ENCODE measurements at regions of chr10 and their contacts with region 1.

Region 1: GRCh38 chr10:117496616-117497028 is 45.9 kb upstream of the EMX2 start:
- DNase-seq: peak; percentile 81
- H3K4me3 Mint-ChIP-seq: no peak overlapping the region
- H3K27ac Mint-ChIP-seq: no peak overlapping the region
- H3K4me1 Mint-ChIP-seq: no peaks in the 10 kb centered on the region
- H3K27me3 Mint-ChIP-seq: peaks cover 33% of the 10 kb centered on the region
- CTCF ChIP-seq: peak; percentile 94

Region 2: GRCh38 chr10:117431160-117431559 is 65.5 kb before region 1 on chr10:
- CTCF ChIA-PET with region 1: interaction called, 77 read pairs
- POLR2A ChIA-PET with region 1: interaction called, 5 read pairs
- intact Hi-C with region 1: loop called (anchors 1 kb)
- DNase-seq: peak; percentile 73
- H3K4me3 Mint-ChIP-seq: no peak overlapping the region
- H3K27ac Mint-ChIP-seq: no peak overlapping the region
- H3K4me1 Mint-ChIP-seq: no peaks in the 10 kb centered on the region
- H3K27me3 Mint-ChIP-seq: no peaks in the 10 kb centered on the region
- CTCF ChIP-seq: peak; percentile 36

Region 3: DNA sequence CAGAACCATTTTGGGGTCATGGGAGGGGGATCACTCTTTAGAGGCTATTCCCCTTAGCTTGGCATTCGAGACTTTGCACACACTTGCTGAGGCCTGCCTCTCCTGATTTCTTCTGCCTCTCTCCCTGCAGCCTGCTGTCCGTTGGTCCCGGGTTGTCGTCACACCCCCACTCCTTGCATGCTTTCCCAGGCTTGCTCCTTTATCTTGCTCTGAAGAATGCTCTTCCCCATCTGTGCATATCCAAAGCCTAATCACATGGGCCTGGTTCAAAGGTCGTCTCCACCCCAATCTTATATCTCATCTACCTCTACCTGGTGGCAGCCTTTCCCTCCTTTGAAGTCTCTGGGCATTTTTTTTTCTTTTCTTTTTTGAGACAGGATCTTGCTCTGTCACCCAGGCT is 21.6 kb after region 1 on chr10:
- CTCF ChIA-PET with region 1: interaction called, 15 read pairs
- POLR2A ChIA-PET with region 1: no interaction called
- intact Hi-C with region 1: no loop called
- DNase-seq: no peak
- H3K4me3 Mint-ChIP-seq: no peak overlapping the region
- H3K27ac Mint-ChIP-seq: no peak overlapping the region
- H3K4me1 Mint-ChIP-seq: no peaks in the 10 kb centered on the region
- H3K27me3 Mint-ChIP-seq: peaks cover 5% of the 10 kb centered on the region
- CTCF ChIP-seq: no peak

Region 4: DNA sequence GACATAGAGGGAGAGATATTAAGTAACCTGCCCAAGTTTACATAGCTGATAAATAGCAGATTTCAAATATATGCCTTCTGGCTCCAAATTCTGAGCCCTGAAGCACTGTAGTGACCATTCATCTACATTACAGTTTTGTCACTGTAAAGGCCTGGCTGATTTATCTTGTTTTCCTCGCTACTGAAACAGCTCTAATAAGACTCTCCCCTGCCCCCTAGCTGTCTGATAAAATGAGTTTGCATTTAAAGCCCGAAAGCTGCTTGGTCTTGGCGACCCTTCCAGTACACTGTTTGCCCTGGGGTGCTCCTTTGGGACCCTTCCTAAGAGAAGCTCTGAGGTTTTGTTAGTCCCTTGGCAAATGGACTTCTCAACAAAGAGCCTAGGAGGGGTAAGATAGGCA is 609.8 kb after region 1 on chr10:
- CTCF ChIA-PET with region 1: interaction called, 7 read pairs
- POLR2A ChIA-PET with region 1: no interaction called
- intact Hi-C with region 1: loop called (anchors 2 kb)
- DNase-seq: peak; percentile 49
- H3K4me3 Mint-ChIP-seq: no peak overlapping the region
- H3K27ac Mint-ChIP-seq: no peak overlapping the region
- H3K4me1 Mint-ChIP-seq: no peaks in the 10 kb centered on the region
- H3K27me3 Mint-ChIP-seq: no peaks in the 10 kb centered on the region
- CTCF ChIP-seq: no peak

Region 5: DNA sequence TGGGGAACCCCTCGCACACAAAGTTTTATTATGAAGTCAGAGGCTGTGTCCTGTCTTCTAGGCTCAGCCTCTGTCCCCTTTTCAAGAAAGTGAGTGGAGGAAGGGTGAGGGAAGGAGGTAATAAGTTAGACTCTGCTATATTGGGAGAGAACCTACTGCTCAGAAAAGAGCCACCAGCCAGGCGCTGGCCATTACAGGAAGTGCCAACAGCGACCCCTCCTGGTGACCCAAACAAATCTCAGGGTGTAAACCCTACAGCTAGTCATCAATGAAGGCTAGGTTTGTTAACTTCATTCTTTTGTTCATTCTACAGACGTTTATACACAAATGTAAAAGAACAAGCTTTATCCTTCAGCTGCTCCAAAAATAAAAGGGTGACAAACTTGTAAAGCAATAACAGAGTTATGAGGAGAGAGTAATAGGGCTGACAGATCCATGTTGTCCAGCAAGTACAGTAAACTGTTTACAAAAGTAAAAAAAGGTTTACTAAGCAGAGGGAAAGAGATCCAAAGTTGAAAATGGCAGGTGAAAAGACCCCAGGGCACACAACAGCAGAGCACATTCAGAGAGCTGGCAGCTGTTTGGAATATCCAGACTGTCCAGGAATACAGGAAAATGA is 762.8 kb after region 1 on chr10:
- CTCF ChIA-PET with region 1: interaction called, 19 read pairs
- POLR2A ChIA-PET with region 1: interaction called, 3 read pairs
- intact Hi-C with region 1: loop called (anchors 1 kb)
- DNase-seq: peak; percentile 56
- H3K4me3 Mint-ChIP-seq: no peak overlapping the region
- H3K27ac Mint-ChIP-seq: no peak overlapping the region
- H3K4me1 Mint-ChIP-seq: no peaks in the 10 kb centered on the region
- H3K27me3 Mint-ChIP-seq: peaks cover 16% of the 10 kb centered on the region
- CTCF ChIP-seq: peak; percentile 74

Region 6: GRCh38 chr10:118543714-118544400 is 1047.2 kb after region 1 on chr10:
- CTCF ChIA-PET with region 1: interaction called, 9 read pairs
- POLR2A ChIA-PET with region 1: no interaction called
- intact Hi-C with region 1: loop called (anchors 1 kb)
- DNase-seq: peak; percentile 81
- H3K4me3 Mint-ChIP-seq: no peak overlapping the region
- H3K27ac Mint-ChIP-seq: no peak overlapping the region
- H3K4me1 Mint-ChIP-seq: no peaks in the 10 kb centered on the region
- H3K27me3 Mint-ChIP-seq: no peaks in the 10 kb centered on the region
- CTCF ChIP-seq: peak; percentile 90

Measured in MCF 10A (cell line).